ENCODE measurements at regions of chr6 and their contacts with region 1.

Region 1: GRCh38 chr6:166419286-166419685 is 36.5 kb upstream of the MPC1 start:
- DNase-seq: peak; percentile 34 to 83 (median 57)
- H3K4me3 ChIP-seq: no peak overlapping the region
- H3K4me3 Mint-ChIP-seq: peak overlapping the region; percentile 21 to 88 (median 75)
- H3K27ac ChIP-seq: peak overlapping the region; percentile 25
- H3K27ac Mint-ChIP-seq: peak overlapping the region; percentile 95 to 100 (median 98)
- H3K4me1 ChIP-seq: peaks cover 72% of the 10 kb centered on the region
- H3K4me1 Mint-ChIP-seq: peaks cover 73 to 82% (median 78%) of the 10 kb centered on the region in 3 donors
- H3K27me3 ChIP-seq: no peaks in the 10 kb centered on the region
- H3K27me3 Mint-ChIP-seq: peaks cover 0 to 7% of the 10 kb centered on the region in 2 donors

Region 2: GRCh38 chr6:166387642-166388289 is 31.5 kb before region 1 on chr6:
- CTCF ChIA-PET with region 1: no interaction called
- POLR2A ChIA-PET with region 1: no interaction called
- DNase-seq: no peak
- H3K4me3 ChIP-seq: no peak overlapping the region
- H3K4me3 Mint-ChIP-seq: peak overlapping the region in 1 of 7 donors; percentile 41
- H3K27ac ChIP-seq: no peak overlapping the region
- H3K27ac Mint-ChIP-seq: no peak overlapping the region
- H3K4me1 ChIP-seq: no peaks in the 10 kb centered on the region
- H3K4me1 Mint-ChIP-seq: peaks cover 4 to 8% (median 5%) of the 10 kb centered on the region in 3 donors
- H3K27me3 ChIP-seq: no peaks in the 10 kb centered on the region
- H3K27me3 Mint-ChIP-seq: peaks cover 3 to 9% of the 10 kb centered on the region in 2 donors

Region 3: GRCh38 chr6:166435574-166435973 is 16.3 kb after region 1 on chr6:
- CTCF ChIA-PET with region 1: interaction called, 11 read pairs
- POLR2A ChIA-PET with region 1: interaction called, 3 read pairs
- DNase-seq: peak; percentile 37 to 79 (median 48)
- H3K4me3 ChIP-seq: no peak overlapping the region
- H3K4me3 Mint-ChIP-seq: peak overlapping the region in 5 of 7 donors; percentile 45 to 70 (median 55)
- H3K27ac ChIP-seq: no peak overlapping the region
- H3K27ac Mint-ChIP-seq: peak overlapping the region; percentile 2 to 90 (median 76)
- H3K4me1 ChIP-seq: peaks cover 16% of the 10 kb centered on the region
- H3K4me1 Mint-ChIP-seq: peaks cover 26 to 43% (median 32%) of the 10 kb centered on the region in 3 donors
- H3K27me3 ChIP-seq: no peaks in the 10 kb centered on the region
- H3K27me3 Mint-ChIP-seq: peaks cover 0 to 4% of the 10 kb centered on the region in 2 donors